ENCODE measurements at regions of chr6 and their contacts with region 1.

Region 1: DNA sequence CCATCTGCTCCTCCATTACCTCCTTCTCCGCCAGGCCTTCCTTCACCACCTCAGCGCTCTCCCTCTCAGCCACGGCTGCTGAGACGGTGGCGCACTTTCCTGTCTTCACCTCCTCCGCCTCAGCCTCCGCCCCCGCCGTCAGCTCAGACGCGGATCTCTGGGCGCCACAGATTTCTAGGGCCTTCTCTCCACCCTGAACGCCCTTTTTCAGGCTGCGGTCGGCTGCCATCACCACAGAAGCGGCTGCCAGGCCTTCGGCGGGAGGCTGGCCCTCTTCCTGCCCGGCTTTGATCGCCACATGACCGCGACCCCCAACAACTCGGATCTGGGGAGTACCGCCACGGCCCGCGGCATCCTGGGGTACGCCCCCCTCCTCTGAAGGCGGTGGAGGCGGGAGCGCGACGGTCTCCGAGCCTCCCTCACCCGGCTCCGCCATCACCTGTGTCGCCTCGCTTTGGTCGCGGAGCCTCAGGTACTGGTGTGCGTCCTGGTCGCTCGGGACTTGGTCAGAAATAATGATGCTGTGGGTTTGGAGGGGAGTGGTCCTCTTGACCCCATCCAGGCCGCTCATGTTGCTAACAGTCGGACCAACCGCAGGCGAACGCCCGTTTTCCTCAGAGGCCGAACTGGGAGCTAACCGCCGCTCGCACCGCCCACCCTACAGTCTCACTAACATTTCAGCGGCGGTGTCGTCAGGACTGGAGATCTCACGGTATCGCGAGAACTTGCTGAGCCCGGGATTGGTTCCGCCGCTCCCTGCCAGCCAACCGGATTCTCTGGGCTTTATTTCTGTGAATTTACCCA is at the start of gene TSPYL1:
- DNase-seq: peak; percentile 97
- H3K4me3 ChIP-seq: peak within 1 kb of the TSS; percentile 49 to 86 (median 81)
- H3K27ac ChIP-seq: peak within 1 kb of the TSS; percentile 96 to 99 (median 98)
- H3K4me1 ChIP-seq: peaks cover 3 to 51% (median 39%) of the 10 kb centered on the region in 4 donors
- H3K27me3 ChIP-seq: no peaks in the 10 kb centered on the region
- CTCF ChIP-seq: no peak
- EP300 ChIP-seq: no peak
- POLR2A ChIP-seq: peak; percentile 98
- total RNA-seq, gene TSPYL1: 16.1 to 59.8 (median 47.9) TPM

Region 2: DNA sequence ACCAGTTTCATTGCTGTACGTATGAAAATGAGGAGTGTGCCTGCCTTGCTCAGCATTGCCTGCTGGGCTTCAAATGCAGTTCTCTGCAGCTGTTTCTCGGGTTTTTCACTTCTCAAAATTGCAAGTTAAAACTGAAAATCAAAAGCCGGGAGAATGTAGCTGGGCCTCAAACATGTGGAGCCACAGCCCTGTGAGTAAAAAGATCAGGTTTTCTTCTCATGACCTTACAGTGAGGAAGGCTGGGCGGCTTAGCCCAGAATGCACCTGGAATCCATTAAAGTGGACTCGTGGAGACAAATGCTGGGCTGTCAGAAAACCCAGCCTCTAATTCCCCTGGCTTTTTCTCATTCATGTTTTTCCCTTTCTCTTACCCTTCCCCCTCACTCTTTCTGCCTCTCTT is 125.7 kb after region 1 on chr6:
- in situ Hi-C with region 1: loop called in 1 of 4 experiments (anchors 25 kb)
- intact Hi-C with region 1: no loop called
- DNase-seq: peak; percentile 14
- H3K4me3 ChIP-seq: no peak overlapping the region
- H3K27ac ChIP-seq: peak overlapping the region; percentile 19 to 58 (median 50)
- H3K4me1 ChIP-seq: peaks cover 0 to 28% (median 0%) of the 10 kb centered on the region in 4 donors
- H3K27me3 ChIP-seq: no peaks in the 10 kb centered on the region
- CTCF ChIP-seq: no peak
- EP300 ChIP-seq: no peak
- POLR2A ChIP-seq: no peak

Region 3: GRCh38 chr6:116531675-116532570 is 252.5 kb after region 1 on chr6:
- in situ Hi-C with region 1: loop called in 2 of 4 experiments (anchors 10 kb)
- intact Hi-C with region 1: loop called (anchors 10 kb)
- DNase-seq: peak; percentile 54
- H3K4me3 ChIP-seq: no peak overlapping the region
- H3K27ac ChIP-seq: no peak overlapping the region
- H3K4me1 ChIP-seq: no peaks in the 10 kb centered on the region
- H3K27me3 ChIP-seq: peaks cover 6% of the 10 kb centered on the region
- CTCF ChIP-seq: peak; percentile 73 to 80 (median 73)
- EP300 ChIP-seq: no peak
- POLR2A ChIP-seq: no peak

Region 4: GRCh38 chr6:116667623-116668022 is 388.2 kb after region 1 on chr6:
- in situ Hi-C with region 1: loop called in 1 of 4 experiments (anchors 25 kb)
- intact Hi-C with region 1: no loop called
- DNase-seq: no peak
- H3K4me3 ChIP-seq: peak overlapping the region in 3 of 4 donors; percentile 73 to 87 (median 82)
- H3K27ac ChIP-seq: peak overlapping the region in 2 of 4 donors; percentile 89 to 91
- H3K4me1 ChIP-seq: peaks cover 0 to 42% (median 21%) of the 10 kb centered on the region in 4 donors
- H3K27me3 ChIP-seq: no peaks in the 10 kb centered on the region
- CTCF ChIP-seq: no peak
- EP300 ChIP-seq: no peak
- POLR2A ChIP-seq: no peak

Measured in transverse colon (tissue), 4 donors.